Left colon (tissue), 2 donors: ENCODE measurements at regions of chr17 and their contacts with region 1.

Region 1: GRCh38 chr17:80008383-80008840 is 27.3 kb downstream of the TBC1D16 start:
- DNase-seq: peak; percentile 68 to 88
- ATAC-seq: peak; percentile 92

Region 2: GRCh38 chr17:80082403-80083135 is 74.2 kb after region 1 on chr17:
- intact Hi-C with region 1: loop called in 1 of 2 experiments (anchors 10 kb)
- DNase-seq: peak in 1 of 2 donors; percentile 64
- ATAC-seq: peak; percentile 65

Region 3: DNA sequence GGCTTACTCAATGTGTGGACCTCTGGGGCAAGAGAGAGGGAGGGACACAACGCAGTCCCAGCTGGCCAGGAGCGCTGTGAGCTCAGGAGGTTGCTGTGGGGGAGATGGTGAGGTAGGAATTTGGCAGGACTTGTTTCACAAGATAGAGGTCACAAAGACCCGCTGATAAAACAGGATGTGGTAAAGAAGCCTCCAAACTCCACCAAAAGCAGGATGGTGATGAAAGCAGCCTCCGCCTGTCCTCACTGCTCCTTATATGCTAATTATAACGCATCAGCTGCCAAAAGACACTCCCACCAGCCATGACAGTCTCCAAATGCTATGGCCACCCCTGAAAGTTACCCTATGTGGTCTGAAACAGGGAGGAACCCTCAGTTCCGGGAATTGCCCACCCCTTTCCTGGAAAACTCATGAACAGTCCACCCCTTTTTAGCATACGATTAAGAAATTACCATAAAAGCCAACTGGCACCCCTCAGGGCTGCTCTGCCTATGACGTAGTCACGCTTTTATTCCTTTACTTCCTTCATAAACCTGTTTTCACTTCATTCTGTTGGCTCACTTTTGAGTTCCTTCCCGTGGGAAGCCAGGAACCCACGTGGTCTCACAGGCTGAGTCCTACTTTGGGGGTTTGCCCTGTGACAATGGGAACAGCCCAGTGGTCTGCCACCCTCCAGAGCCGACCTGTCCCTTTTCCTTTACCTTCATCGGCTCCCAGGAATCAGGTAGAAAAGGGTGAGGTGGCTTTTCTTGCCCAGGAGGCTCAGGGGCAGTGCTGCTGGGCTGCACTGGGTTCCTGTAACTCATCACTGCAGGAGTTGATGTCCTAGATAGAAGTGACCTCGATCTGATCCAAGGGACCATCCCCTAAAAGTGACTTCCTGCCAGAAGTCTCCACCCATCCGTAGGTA is 143.9 kb after region 1 on chr17:
- intact Hi-C with region 1: no loop called
- DNase-seq: no peak
- ATAC-seq: no peak